Esophagus muscularis mucosa (tissue), 4 donors: ENCODE measurements at regions of chr17 and their contacts with region 1.

Region 1: DNA sequence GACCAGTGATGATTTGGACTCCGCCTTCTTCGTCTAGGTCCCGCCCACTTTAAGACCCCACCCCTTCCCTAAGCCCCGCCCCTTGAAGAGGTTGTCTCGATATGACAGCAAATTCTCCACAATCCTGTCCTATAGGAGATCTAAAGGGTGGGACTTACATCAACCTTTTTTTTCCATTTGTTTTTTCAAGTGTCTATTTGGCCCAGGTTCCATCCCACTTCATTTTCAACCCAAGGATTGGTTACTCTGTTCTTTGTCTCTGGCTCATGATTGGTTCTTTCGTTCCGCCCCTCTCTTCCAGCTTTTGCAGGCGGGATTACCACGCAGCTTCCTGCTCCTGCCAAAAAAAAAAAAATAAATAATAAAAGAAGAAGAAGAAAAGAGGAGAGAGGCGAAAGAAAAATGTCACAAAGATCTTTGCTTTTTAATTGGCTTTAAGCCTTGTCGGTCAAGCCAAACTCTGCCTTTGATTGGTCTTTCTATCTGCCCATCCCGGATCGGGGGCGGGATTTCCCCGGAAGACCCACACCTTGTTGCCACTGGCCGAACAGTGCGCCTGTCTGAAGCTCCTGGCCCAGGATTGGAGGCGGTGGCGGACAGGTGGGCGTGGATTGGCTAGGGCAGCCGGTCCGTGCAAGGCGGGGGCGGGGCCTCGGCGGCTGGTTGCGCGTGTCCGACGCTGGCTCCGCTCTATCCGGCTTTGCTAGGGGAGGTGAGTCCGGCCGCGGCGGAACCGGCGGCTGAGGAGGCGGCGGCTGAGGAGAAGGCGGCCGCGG is 1.2 kb upstream of the NLK start:
- DNase-seq: peak; percentile 100
- H3K4me3 ChIP-seq: peak overlapping the region; percentile 79 to 98 (median 91)
- H3K27ac ChIP-seq: peak overlapping the region; percentile 90 to 95 (median 92)
- H3K4me1 ChIP-seq: peaks cover 37 to 48% (median 43%) of the 10 kb centered on the region in 4 donors
- H3K27me3 ChIP-seq: no peaks in the 10 kb centered on the region
- CTCF ChIP-seq: no peak
- EP300 ChIP-seq: no peak
- POLR2A ChIP-seq: no peak

Region 2: DNA sequence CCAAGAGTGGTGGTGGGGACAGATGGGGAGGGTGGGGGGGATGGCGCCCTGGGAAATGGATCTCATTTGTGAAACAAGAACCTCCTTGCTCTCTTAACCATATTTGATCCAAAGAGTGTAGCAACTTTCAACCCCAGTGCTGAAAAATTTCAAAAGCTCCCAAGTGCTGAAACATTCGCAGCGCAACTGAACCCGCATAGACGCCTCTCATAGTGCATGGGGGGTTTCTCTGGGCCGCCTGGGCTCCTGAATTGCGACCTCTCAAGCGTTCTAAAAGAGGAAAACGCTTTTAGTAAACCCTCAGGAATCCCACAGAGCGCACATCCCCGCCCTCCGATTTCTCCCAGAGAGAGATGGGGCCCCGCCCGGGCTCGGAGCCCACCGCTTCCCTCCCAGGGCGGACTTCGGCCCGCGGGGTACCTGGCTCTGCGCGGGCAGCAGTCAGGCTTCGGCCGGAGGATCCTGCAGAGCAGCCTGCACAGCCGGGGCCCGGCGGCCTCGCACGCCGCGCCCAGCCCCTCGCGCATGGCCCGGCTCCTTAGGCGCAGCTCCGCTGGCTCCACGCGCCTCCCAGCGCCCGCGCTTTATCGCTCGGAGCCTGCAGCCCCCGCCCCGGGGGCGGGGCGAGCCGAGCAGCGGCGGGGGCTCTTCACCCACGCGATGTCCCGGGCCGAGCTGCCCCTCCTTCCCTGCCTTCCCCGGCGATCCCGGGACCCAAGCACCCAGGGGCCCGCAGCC is 247.9 kb before region 1 on chr17:
- intact Hi-C with region 1: no loop called
- DNase-seq: no peak
- H3K4me3 ChIP-seq: peak overlapping the region; percentile 38 to 53 (median 44)
- H3K27ac ChIP-seq: no peak overlapping the region
- H3K4me1 ChIP-seq: peaks cover 9 to 15% (median 13%) of the 10 kb centered on the region in 4 donors
- H3K27me3 ChIP-seq: peaks cover 0 to 40% (median 13%) of the 10 kb centered on the region in 4 donors
- CTCF ChIP-seq: no peak
- EP300 ChIP-seq: no peak
- POLR2A ChIP-seq: no peak

Region 3: GRCh38 chr17:27892866-27893769 is 148.1 kb before region 1 on chr17 and contains the start of gene LYRM9:
- intact Hi-C with region 1: loop called (anchors 10 kb)
- DNase-seq: peak; percentile 93
- H3K4me3 ChIP-seq: peak within 1 kb of the TSS; percentile 69 to 89 (median 80)
- H3K27ac ChIP-seq: peak within 1 kb of the TSS; percentile 84 to 89 (median 86)
- H3K4me1 ChIP-seq: peaks cover 3 to 34% (median 27%) of the 10 kb centered on the region in 4 donors
- H3K27me3 ChIP-seq: peaks cover 0 to 12% (median 0%) of the 10 kb centered on the region in 4 donors
- CTCF ChIP-seq: peak; percentile 84 to 98 (median 87)
- EP300 ChIP-seq: no peak
- POLR2A ChIP-seq: no peak
- total RNA-seq, gene LYRM9: 5.0 to 21.6 (median 16.7) TPM

Region 4: DNA sequence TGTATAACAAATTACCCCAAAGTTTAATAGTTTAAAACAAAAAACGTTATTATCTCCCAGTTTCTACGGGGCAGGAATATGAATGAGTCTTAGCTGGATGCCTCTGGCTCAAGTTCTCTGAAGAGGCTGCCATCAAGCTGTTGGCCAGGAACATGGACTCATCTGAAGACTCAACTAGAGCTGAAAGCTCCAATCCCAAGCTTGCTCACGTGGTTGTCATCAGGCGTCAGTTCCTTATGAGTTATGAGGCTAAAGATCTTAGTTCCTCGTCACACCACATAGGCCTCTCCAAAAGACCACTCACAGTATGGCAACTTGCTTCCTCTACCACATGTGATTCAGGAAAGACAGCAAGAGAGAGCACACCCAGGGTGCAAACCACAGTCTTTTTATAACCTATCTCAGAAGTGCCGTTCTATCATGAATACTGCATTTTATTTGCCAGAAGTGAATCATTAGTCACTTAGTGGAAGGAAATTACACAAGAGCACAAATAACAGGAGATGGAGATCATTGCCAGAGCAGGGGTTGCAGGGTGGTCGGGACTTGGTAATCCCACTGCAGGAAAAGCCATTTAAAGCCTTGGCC is 47.4 kb before region 1 on chr17:
- intact Hi-C with region 1: no loop called
- DNase-seq: no peak
- H3K4me3 ChIP-seq: no peak overlapping the region
- H3K27ac ChIP-seq: no peak overlapping the region
- H3K4me1 ChIP-seq: no peaks in the 10 kb centered on the region
- H3K27me3 ChIP-seq: no peaks in the 10 kb centered on the region
- CTCF ChIP-seq: no peak
- EP300 ChIP-seq: no peak
- POLR2A ChIP-seq: no peak

Region 5: GRCh38 chr17:28335201-28335955 is 294.1 kb after region 1 on chr17 and contains the starts of genes IFT20 and TNFAIP1:
- intact Hi-C with region 1: loop called (anchors 10 kb)
- DNase-seq: peak; percentile 100
- H3K4me3 ChIP-seq: peak within 1 kb of the TSS; percentile 79 to 90 (median 84)
- H3K27ac ChIP-seq: peak within 1 kb of the TSS; percentile 91 to 99 (median 97)
- H3K4me1 ChIP-seq: peaks cover 55 to 67% (median 58%) of the 10 kb centered on the region in 4 donors
- H3K27me3 ChIP-seq: no peaks in the 10 kb centered on the region
- CTCF ChIP-seq: peak in 1 of 3 experiments; percentile 20
- EP300 ChIP-seq: no peak
- POLR2A ChIP-seq: peak; percentile 96
- total RNA-seq, gene IFT20: 41.3 to 63.5 (median 47.0) TPM
- total RNA-seq, gene TNFAIP1: 23.7 to 43.8 (median 34.8) TPM